Sigmoid colon (tissue), 7 donors: ENCODE measurements at regions of chr6 and their contacts with region 1.

Region 1: GRCh38 chr6:108782179-108783041 is 65.8 kb upstream of the ARMC2 start:
- DNase-seq: peak; percentile 93
- H3K4me3 ChIP-seq: peak overlapping the region; percentile 23 to 52 (median 42)
- H3K27ac ChIP-seq: peak overlapping the region; percentile 63 to 83 (median 68)
- H3K4me1 ChIP-seq: peaks cover 0 to 23% (median 14%) of the 10 kb centered on the region in 4 donors
- H3K27me3 ChIP-seq: no peaks in the 10 kb centered on the region
- CTCF ChIP-seq: peak; percentile 55 to 76 (median 64)
- EP300 ChIP-seq: peak in 2 of 4 donors; percentile 28 to 51
- POLR2A ChIP-seq: no peak

Region 2: GRCh38 chr6:108541838-108542759 is 240.3 kb before region 1 on chr6:
- intact Hi-C with region 1: loop called (anchors 2 kb)
- DNase-seq: peak; percentile 84
- H3K4me3 ChIP-seq: no peak overlapping the region
- H3K27ac ChIP-seq: no peak overlapping the region
- H3K4me1 ChIP-seq: peaks cover 0 to 16% (median 5%) of the 10 kb centered on the region in 4 donors
- H3K27me3 ChIP-seq: no peaks in the 10 kb centered on the region
- CTCF ChIP-seq: peak; percentile 73 to 94 (median 93)
- EP300 ChIP-seq: no peak
- POLR2A ChIP-seq: no peak

Region 3: DNA sequence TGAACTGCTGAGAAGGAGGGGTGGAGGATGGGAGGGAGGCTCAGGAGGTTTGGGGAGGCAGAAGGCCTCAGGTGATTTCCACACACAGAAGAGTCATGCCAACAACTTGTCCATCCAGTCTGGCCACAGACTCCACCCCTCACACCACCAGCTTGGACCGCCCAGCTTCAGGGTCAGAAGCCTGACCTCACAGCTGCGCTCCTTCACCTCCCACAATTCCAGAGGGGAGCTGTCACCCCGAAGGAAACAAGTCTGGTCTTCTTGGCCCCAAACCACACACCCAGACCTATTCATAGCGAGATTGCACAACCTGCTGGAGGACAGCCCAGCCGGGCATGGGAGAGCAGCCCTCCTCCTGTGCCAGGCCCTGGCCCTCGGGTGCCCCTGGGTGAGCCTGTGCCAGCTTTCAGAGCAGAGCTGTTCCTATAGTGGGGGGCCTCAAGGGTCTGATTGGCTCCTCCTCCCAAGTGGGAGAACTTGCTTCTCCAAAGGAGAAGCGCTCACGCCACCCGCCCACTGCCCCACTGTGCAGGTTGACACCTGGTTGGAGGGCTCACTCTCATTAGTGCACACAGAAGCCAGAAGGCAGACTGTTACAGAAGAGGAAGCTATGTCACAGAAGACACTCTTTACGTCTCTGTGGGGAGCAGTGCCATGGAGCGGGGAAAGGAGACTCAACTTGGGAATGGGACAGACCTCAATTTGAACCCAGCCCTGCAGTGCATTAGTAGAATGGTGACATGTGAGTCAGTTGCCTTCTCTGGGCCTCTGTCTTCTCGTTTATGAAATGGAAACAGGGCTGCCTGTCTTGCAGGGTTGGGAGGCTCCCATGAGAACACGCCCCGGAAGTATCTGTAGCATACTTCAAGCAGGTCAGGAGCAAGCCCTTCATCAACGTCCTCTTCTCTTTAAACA is 92.9 kb before region 1 on chr6:
- intact Hi-C with region 1: loop called (anchors 5 kb)
- DNase-seq: peak; percentile 95
- H3K4me3 ChIP-seq: no peak overlapping the region
- H3K27ac ChIP-seq: peak overlapping the region; percentile 35 to 65 (median 54)
- H3K4me1 ChIP-seq: peaks cover 0 to 40% (median 30%) of the 10 kb centered on the region in 4 donors
- H3K27me3 ChIP-seq: no peaks in the 10 kb centered on the region
- CTCF ChIP-seq: no peak
- EP300 ChIP-seq: peak in 2 of 4 donors; percentile 60 to 75
- POLR2A ChIP-seq: no peak

Region 4: GRCh38 chr6:108748055-108748454 is 34.4 kb before region 1 on chr6:
- intact Hi-C with region 1: loop called (anchors 5 kb)
- DNase-seq: no peak
- H3K4me3 ChIP-seq: no peak overlapping the region
- H3K27ac ChIP-seq: no peak overlapping the region
- H3K4me1 ChIP-seq: peaks cover 0 to 60% (median 43%) of the 10 kb centered on the region in 4 donors
- H3K27me3 ChIP-seq: no peaks in the 10 kb centered on the region
- CTCF ChIP-seq: no peak
- EP300 ChIP-seq: no peak
- POLR2A ChIP-seq: no peak

Region 5: GRCh38 chr6:108835218-108835850 is 52.9 kb after region 1 on chr6:
- intact Hi-C with region 1: loop called (anchors 2 kb)
- DNase-seq: peak; percentile 94
- H3K4me3 ChIP-seq: no peak overlapping the region
- H3K27ac ChIP-seq: no peak overlapping the region
- H3K4me1 ChIP-seq: peaks cover 0 to 15% (median 0%) of the 10 kb centered on the region in 4 donors
- H3K27me3 ChIP-seq: no peaks in the 10 kb centered on the region
- CTCF ChIP-seq: peak; percentile 91 to 99 (median 95)
- EP300 ChIP-seq: no peak
- POLR2A ChIP-seq: no peak

Region 6: GRCh38 chr6:108862479-108863191 is 80.2 kb after region 1 on chr6:
- intact Hi-C with region 1: no loop called
- DNase-seq: no peak
- H3K4me3 ChIP-seq: no peak overlapping the region
- H3K27ac ChIP-seq: no peak overlapping the region
- H3K4me1 ChIP-seq: peaks cover 0 to 15% (median 8%) of the 10 kb centered on the region in 4 donors
- H3K27me3 ChIP-seq: no peaks in the 10 kb centered on the region
- CTCF ChIP-seq: no peak
- EP300 ChIP-seq: no peak
- POLR2A ChIP-seq: no peak

Region 7: DNA sequence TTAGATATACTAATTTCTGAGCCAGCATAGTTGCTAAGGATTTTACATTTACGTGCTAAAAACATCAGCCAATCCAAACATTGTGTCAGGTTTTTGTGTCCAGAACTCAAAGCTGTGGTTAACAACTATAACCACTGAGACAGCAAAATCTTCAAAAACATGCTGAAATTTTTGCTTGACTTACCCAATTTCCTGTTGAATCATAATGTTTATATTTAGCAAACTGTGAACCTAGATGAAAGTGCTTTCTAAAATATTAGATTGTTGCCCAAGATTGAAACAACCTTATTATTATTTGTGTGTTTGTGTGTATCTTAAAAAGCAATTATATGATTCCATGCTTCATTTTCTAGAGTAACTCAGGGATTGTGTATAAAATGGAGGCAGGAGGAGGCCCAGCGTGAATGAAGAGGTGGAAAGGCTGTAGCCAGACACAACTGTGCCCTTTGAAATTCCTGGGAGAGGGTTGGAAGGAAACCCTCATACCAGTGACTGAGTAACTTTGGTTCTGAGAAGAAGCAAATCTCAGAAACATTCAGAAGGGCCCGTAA is 113.8 kb after region 1 on chr6:
- intact Hi-C with region 1: loop called (anchors 5 kb)
- DNase-seq: no peak
- H3K4me3 ChIP-seq: no peak overlapping the region
- H3K27ac ChIP-seq: peak overlapping the region; percentile 15 to 62 (median 48)
- H3K4me1 ChIP-seq: peaks cover 0 to 3% (median 0%) of the 10 kb centered on the region in 4 donors
- H3K27me3 ChIP-seq: no peaks in the 10 kb centered on the region
- CTCF ChIP-seq: no peak
- EP300 ChIP-seq: peak in 2 of 4 donors; percentile 50 to 56
- POLR2A ChIP-seq: no peak